Calu3 (cell line): ENCODE measurements at regions of chr7 and their contacts with region 1.

Region 1: DNA sequence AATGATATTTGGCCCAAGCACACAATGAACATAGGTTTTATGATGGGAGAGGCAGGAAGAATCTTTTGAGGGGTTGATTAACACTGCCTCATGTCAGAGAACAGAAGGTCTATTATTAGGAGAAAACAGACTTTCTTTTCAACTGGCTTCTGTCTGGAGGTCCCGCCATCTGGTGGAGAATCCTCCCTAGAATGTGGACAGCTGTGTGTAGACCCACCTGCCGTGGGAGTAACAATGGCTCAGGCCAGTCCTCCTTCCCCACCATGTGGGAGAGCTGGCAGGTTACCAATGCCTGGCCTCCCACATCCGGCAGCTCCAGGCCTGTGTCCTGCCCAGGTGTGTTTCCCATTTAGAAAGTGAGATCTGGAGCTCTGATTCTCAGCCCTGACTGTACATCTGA is 70.4 kb upstream of the AOAH start:
- DNase-seq: peak; percentile 81
- H3K4me3 Mint-ChIP-seq: no peak overlapping the region
- H3K27ac Mint-ChIP-seq: no peak overlapping the region
- H3K4me1 Mint-ChIP-seq: peaks cover 36% of the 10 kb centered on the region
- H3K27me3 Mint-ChIP-seq: peaks cover 13% of the 10 kb centered on the region
- CTCF ChIP-seq: no peak

Region 2: DNA sequence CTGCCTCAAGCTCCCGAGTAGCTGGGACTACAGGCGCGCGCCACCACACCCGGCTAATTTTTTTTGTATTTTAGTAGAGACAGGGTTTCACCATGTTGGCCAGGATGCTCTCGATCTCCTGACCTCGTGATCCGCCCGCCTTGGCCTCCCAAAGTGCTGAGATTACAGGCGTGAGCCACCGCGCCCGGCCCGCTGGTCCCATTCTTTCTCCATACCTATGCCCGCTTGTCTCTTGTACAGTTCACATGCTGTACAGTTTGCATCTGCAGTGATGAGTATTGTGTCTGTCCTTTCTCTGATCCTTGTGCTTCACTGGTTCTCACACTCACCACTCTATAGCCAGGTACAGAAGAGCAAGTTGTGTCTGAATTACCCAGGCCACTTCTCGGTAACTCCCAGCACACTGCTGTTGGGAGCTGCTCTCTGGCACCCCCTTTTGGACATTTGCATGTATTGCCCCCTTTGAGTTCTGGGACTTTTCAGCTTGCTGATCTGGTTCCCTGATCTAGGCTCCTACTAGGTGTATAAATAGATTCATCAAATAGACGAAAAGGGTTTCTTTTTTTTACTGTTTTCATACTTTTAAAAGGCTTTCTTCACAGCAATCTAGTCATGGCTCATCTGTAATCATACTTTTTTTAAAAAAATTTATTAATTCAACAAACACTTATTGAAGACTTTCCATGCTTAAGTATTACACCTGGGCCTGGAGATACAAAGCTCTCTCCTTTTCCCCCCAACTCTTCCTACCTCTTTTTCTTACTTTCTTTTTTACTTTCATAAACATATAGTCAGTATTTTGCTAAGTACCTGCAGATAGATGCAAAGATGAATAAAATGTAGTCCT is 123.9 kb before region 1 on chr7:
- CTCF ChIA-PET with region 1: interaction called, 12 read pairs
- intact Hi-C with region 1: no loop called
- DNase-seq: peak; percentile 83
- H3K4me3 Mint-ChIP-seq: no peak overlapping the region
- H3K27ac Mint-ChIP-seq: no peak overlapping the region
- H3K4me1 Mint-ChIP-seq: peaks cover 26% of the 10 kb centered on the region
- H3K27me3 Mint-ChIP-seq: no peaks in the 10 kb centered on the region
- CTCF ChIP-seq: peak; percentile 94

Region 3: DNA sequence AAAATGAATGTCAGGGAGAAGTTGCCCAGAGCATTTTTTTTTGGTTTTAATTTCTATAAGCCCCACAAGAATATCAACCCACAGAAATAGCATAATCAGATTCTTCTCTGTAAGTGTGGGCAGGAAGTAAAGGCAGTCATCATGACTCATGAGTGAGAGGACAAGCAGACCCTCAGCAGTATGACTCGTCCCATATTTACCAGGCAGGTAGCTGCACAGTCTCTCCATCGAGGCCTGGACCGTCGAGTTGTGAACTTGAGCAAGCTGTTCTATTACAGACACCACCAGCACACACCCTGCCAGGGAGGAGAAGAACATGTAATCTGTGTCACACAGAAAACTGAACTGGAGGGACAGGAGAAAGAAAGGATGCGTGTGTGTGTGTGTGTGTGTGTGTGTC is 108.2 kb before region 1 on chr7:
- CTCF ChIA-PET with region 1: interaction called, 3 read pairs
- intact Hi-C with region 1: loop called (anchors 10 kb)
- DNase-seq: peak; percentile 28
- H3K4me3 Mint-ChIP-seq: no peak overlapping the region
- H3K27ac Mint-ChIP-seq: peak overlapping the region; percentile 7
- H3K4me1 Mint-ChIP-seq: peaks cover 18% of the 10 kb centered on the region
- H3K27me3 Mint-ChIP-seq: no peaks in the 10 kb centered on the region
- CTCF ChIP-seq: no peak

Region 4: DNA sequence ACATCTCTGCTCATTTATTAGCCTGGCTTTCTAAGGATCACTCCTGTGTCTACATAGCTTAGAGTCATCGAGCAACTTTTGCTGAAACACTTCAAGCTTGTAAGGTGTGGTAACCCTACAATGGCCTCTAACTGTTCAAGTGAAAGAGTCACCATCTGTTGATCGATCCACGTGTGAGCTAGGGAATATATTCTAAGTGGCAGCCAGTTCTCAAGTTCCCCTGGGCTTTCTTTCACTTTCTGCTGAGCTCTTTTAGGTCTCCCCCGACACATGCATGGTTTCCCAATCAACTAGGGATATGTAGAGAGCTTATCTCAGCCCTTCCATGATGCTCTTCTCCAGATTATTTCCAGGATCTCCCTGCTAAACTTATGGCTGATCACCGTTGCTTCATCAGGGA is 85.9 kb before region 1 on chr7:
- CTCF ChIA-PET with region 1: no interaction called
- intact Hi-C with region 1: loop called (anchors 2 kb)
- DNase-seq: peak; percentile 28
- H3K4me3 Mint-ChIP-seq: peak overlapping the region; percentile 46
- H3K27ac Mint-ChIP-seq: peak overlapping the region; percentile 66
- H3K4me1 Mint-ChIP-seq: peaks cover 46% of the 10 kb centered on the region
- H3K27me3 Mint-ChIP-seq: no peaks in the 10 kb centered on the region
- CTCF ChIP-seq: no peak

Region 5: DNA sequence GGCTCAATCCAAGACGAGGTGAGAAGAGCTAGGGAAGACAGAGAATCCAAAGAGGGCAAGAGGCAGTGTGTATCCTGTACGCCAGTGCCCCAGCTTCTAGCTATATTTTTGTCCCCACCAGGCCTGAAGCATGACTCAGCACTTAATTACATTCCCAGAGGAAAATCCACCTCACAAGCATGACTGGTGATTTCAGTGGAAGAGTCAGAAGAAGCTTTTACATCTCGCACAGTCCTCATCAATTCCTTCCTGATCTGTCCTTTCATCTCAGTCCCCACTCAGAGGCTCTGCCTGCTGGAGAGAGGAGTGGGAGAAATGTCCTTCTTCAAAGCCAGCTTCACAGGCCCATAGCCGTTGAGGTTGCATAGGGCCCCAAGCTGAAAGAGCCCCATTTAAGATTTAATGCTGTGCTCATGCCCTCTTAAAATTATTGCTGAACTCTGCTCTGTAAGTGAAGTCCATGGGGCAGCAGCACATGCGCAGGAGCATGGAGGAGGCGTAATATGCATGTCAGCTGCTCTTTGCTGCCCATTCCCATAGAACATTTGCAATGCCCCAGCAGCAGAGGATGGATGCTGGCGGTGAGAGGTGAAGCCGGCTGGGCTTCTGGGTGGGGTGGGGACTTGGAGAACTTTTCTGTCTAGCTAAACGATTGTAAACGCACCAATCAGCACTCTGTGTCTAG is 31.4 kb before region 1 on chr7:
- CTCF ChIA-PET with region 1: no interaction called
- intact Hi-C with region 1: no loop called
- DNase-seq: no peak
- H3K4me3 Mint-ChIP-seq: no peak overlapping the region
- H3K27ac Mint-ChIP-seq: no peak overlapping the region
- H3K4me1 Mint-ChIP-seq: peaks cover 34% of the 10 kb centered on the region
- H3K27me3 Mint-ChIP-seq: no peaks in the 10 kb centered on the region
- CTCF ChIP-seq: no peak

Region 6: GRCh38 chr7:36967387-36967786 is 172.7 kb after region 1 on chr7:
- CTCF ChIA-PET with region 1: interaction called, 4 read pairs
- intact Hi-C with region 1: loop called (anchors 10 kb)
- DNase-seq: peak; percentile 75
- H3K4me3 Mint-ChIP-seq: no peak overlapping the region
- H3K27ac Mint-ChIP-seq: no peak overlapping the region
- H3K4me1 Mint-ChIP-seq: peaks cover 51% of the 10 kb centered on the region
- H3K27me3 Mint-ChIP-seq: no peaks in the 10 kb centered on the region
- CTCF ChIP-seq: peak; percentile 87